PC-9 (cell line): ENCODE measurements at regions of chr17 and their contacts with region 1.

Region 1: DNA sequence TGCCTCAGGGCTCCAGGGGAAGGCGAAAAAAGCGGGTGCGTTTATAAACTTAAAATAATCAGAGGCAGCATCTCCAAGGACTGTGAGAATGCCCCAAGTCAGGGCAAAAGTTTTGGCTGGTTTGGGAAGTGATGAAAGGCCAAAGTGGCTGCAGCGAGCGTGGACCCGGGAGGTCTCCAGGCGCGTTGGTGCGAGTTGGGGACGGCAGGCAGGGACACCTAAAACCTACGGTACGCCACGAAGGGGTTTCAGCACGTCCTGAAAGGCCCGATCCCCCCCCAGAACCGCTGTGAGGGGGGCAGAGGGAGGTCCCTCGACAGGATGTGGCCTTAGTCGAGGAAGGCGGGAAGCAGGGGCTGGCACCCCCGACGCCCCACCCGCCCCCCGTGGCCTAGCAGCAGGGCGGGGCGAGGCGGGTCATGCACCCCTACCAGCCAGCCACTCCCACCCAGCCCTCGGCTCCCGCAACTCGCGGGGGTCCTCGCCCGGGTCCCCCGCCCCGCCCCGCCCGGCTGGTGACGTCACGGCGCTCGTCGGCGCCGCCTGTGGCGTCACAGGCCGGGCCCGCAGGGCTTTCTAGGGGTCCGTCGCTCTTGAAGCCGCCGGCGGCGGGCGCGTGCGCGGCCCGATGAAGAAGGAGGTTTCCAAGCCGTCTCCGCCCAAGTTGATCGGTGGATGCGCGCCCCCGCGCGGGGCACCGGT is at the start of gene MYCBPAP:
- DNase-seq: peak in 1 of 2 experiments; percentile 76
- H3K4me3 ChIP-seq: peak within 1 kb of the TSS; percentile 44; the same call in 1 of the 2 replicates
- H3K27ac ChIP-seq: no peak within 1 kb of the TSS
- H3K4me1 ChIP-seq: peaks cover 42% of the 10 kb centered on the region
- H3K27me3 ChIP-seq: no peaks in the 10 kb centered on the region
- CTCF ChIP-seq: no peak
- total RNA-seq, gene MYCBPAP: 4.9 and 11.6 TPM in 2 replicates

Region 2: GRCh38 chr17:50064258-50065001 is 443.6 kb before region 1 on chr17:
- CTCF ChIA-PET with region 1: no interaction called
- POLR2A ChIA-PET with region 1: interaction called, 11 read pairs
- intact Hi-C with region 1: no loop called
- DNase-seq: peak; percentile 93 to 98
- H3K4me3 ChIP-seq: peak overlapping the region; percentile 47; the same call in 1 of the 2 replicates
- H3K27ac ChIP-seq: peak overlapping the region; percentile 97
- H3K4me1 ChIP-seq: peaks cover 82% of the 10 kb centered on the region
- H3K27me3 ChIP-seq: no peaks in the 10 kb centered on the region
- CTCF ChIP-seq: no peak

Region 3: DNA sequence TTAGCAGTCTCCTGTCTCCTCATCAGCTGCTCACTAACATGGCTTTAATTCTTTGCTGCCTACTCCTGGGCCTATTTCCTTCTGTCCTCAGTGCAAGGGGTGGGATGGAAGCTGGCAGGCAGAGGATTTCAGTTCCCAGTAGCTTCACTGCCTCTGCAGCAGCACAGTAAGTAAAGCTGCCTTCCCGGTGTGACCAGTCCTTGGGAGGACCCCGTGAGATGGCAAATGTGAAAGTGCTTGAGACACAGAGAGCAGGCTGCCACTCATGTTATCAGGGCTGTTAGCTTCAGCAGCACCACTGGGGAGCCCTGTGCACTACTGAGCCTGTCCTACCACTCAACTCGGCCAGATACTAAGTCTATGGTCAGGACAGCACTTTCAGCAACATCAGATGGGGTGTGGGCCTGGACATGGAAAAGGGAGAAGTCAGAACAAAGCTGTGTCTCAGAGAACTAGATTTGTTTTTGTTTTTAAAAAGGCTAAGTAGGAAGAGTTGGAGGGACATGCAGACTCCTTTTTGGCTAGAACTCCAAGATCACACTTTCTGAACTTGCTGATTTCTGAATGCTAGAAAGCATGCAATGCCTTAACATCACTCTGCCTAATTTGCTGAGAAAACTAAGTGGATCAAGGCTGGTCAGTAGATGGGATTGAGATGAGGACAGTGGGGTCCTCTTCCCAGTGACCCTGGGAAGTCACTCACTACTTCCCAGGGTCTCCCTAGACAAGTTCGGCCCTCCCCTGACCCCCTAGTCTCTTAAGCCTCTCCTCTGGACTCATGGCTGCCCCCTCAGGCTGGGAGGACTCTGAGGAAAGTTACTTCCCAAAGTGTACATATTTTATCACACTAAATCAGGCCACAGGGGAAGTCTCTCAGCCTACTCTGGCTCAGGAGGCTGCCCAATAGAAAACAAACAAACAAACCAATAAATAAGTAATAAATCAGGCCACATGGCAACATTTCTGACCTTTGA is 80.9 kb before region 1 on chr17:
- CTCF ChIA-PET with region 1: no interaction called
- POLR2A ChIA-PET with region 1: no interaction called
- intact Hi-C with region 1: no loop called
- DNase-seq: peak; percentile 46 to 67
- H3K4me3 ChIP-seq: peak overlapping the region; percentile 63
- H3K27ac ChIP-seq: peak overlapping the region; percentile 40
- H3K4me1 ChIP-seq: peaks cover 82% of the 10 kb centered on the region
- H3K27me3 ChIP-seq: no peaks in the 10 kb centered on the region
- CTCF ChIP-seq: peak; percentile 67

Region 4: DNA sequence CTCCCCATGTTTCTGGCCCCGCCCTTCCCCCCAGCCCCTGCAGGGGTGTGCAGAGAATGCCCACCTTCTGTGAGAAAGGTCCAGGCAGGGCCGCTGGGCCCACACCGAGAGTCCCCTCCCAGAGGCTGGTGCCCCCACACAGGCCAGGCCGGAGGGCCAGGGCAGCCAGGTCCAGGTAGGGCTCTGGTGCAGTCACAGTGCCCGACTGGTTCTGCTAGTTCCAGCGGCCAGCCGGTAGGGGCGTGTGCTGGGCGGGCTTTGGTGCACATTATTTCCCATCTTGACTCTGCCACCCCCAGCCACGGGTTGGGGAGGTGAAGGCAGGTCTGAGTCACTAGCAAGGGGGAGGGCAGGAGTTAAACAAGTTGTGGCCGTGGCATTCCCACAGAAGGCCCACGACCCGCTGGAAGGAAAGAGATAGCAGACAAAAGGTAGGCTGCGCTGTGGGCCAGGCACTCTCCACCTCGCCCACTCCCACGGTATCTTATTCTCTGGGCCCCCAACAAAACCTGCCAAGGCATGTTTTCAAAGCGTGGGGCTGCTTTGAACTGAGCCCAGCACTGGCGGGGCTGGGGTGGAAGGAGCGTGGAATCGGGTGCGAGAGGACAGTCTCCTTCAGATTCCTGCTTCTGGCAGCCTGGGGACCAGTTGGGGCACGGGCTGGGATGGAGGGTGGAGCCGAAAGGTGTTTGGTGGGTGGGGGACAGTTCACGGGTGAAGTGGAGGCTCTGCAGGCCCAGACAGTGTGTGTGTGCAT is 26.4 kb after region 1 on chr17:
- CTCF ChIA-PET with region 1: interaction called, 3 read pairs
- POLR2A ChIA-PET with region 1: no interaction called
- intact Hi-C with region 1: loop called (anchors 2 kb)
- DNase-seq: peak; percentile 79 to 82
- H3K4me3 ChIP-seq: peak overlapping the region; percentile 89
- H3K27ac ChIP-seq: peak overlapping the region; percentile 51
- H3K4me1 ChIP-seq: peaks cover 42% of the 10 kb centered on the region
- H3K27me3 ChIP-seq: no peaks in the 10 kb centered on the region
- CTCF ChIP-seq: peak; percentile 72; the same call in 1 of the 2 replicates

Region 5: GRCh38 chr17:52157603-52158449 is 1649.8 kb after region 1 on chr17:
- CTCF ChIA-PET with region 1: no interaction called
- POLR2A ChIA-PET with region 1: no interaction called
- intact Hi-C with region 1: no loop called
- DNase-seq: no peak
- H3K4me3 ChIP-seq: no peak overlapping the region
- H3K27ac ChIP-seq: no peak overlapping the region
- H3K4me1 ChIP-seq: no peaks in the 10 kb centered on the region
- H3K27me3 ChIP-seq: peaks cover 24% of the 10 kb centered on the region
- CTCF ChIP-seq: no peak